ENCODE measurements at regions of chr4 and their contacts with region 1.

Region 1: DNA sequence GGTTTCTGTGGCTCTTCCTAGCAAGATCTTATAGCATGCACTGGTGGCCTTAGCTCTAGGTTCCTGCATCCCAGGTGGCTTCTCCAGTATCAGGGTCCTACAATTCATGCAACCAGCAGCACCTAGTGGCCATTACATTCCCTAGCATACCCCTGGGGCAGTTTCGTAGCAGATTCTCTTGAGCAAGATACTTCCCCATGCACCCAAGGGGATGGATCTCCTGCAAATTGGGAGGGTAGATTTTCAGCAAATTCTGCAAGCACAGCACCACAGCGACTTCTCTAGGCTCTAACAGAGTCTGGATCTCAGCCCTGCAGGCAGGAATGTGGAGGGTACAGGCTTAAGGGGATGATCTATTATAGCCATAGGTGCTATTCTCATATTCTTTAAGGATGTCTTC is 13.1 kb upstream of the SLC9B1 start:
- DNase-seq: peak; percentile 60
- ATAC-seq: peak; percentile 100
- H3K4me3 Mint-ChIP-seq: no peak overlapping the region
- H3K27ac Mint-ChIP-seq: no peak overlapping the region
- H3K4me1 Mint-ChIP-seq: no peaks in the 10 kb centered on the region
- H3K27me3 Mint-ChIP-seq: no peaks in the 10 kb centered on the region; the same call in 1 of the 2 replicates
- CTCF ChIP-seq: peak; percentile 67; the same call in 1 of the 2 replicates

Region 2: GRCh38 chr4:103008875-103009729 is 23.5 kb before region 1 on chr4:
- CTCF ChIA-PET with region 1: interaction called, 14 read pairs
- POLR2A ChIA-PET with region 1: no interaction called
- DNase-seq: no peak
- ATAC-seq: peak; percentile 92
- H3K4me3 Mint-ChIP-seq: no peak overlapping the region
- H3K27ac Mint-ChIP-seq: no peak overlapping the region
- H3K4me1 Mint-ChIP-seq: no peaks in the 10 kb centered on the region
- H3K27me3 Mint-ChIP-seq: no peaks in the 10 kb centered on the region; the same call in 1 of the 2 replicates
- CTCF ChIP-seq: peak; percentile 32

Region 3: DNA sequence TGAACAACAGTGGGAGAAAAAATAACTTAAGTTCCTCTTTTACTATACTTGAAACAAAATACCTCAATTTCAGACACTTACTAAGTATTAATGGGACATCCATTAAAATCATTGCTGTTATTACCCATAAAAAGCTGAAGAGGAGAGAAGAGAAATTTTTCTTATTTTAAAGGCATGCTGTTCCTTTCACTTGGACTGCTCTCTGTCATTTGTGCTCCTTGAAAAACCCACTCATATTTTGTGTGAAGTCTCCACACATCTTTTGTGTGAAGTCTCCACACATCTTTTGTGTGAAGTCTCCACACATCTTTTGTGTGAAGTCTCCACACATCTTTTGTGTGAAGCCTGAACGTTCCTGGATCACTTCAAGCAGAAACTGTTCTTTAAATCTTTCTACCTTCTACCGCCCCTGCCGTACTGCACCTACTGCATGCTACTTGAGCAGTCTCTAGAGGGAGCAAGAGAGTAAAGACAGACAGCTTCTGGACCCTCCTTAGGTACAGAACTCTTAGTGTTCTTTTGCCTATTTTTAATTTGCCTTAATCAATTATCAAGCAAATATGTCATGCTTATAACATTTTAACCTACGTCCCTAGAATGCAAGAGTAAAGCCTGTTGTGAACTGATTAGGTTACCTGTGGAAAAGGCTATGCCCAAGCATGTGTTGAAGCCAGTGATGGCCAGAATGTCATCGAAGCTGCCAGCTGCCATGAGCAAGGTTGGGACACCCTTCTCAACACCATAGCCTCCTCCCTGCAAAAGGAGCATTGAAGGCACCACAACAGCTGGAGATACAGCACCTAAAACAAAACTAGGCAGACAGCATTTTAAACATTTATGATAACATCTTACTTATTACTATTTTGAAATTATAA is 14.1 kb after region 1 on chr4:
- CTCF ChIA-PET with region 1: interaction called, 37 read pairs
- POLR2A ChIA-PET with region 1: no interaction called
- DNase-seq: peak; percentile 37
- ATAC-seq: peak; percentile 99
- H3K4me3 Mint-ChIP-seq: no peak overlapping the region
- H3K27ac Mint-ChIP-seq: no peak overlapping the region
- H3K4me1 Mint-ChIP-seq: peaks cover 6% of the 10 kb centered on the region
- H3K27me3 Mint-ChIP-seq: no peaks in the 10 kb centered on the region
- CTCF ChIP-seq: peak; percentile 57

Region 4: GRCh38 chr4:103099691-103100392 is 67.3 kb after region 1 on chr4 and contains the start of gene BDH2:
- CTCF ChIA-PET with region 1: interaction called, 13 read pairs
- POLR2A ChIA-PET with region 1: no interaction called
- DNase-seq: no peak
- ATAC-seq: peak; percentile 90
- H3K4me3 Mint-ChIP-seq: peak within 1 kb of the TSS; percentile 88
- H3K27ac Mint-ChIP-seq: peak within 1 kb of the TSS; percentile 87
- H3K4me1 Mint-ChIP-seq: peaks cover 13% of the 10 kb centered on the region
- H3K27me3 Mint-ChIP-seq: no peaks in the 10 kb centered on the region
- CTCF ChIP-seq: peak; percentile 63
- total RNA-seq, gene BDH2: 38.8 to 40.7 TPM (median 39.6 TPM) in 3 replicates

Measured in WTC11 (cell line).